ENCODE measurements at regions of chr12 and their contacts with region 1.

Region 1: DNA sequence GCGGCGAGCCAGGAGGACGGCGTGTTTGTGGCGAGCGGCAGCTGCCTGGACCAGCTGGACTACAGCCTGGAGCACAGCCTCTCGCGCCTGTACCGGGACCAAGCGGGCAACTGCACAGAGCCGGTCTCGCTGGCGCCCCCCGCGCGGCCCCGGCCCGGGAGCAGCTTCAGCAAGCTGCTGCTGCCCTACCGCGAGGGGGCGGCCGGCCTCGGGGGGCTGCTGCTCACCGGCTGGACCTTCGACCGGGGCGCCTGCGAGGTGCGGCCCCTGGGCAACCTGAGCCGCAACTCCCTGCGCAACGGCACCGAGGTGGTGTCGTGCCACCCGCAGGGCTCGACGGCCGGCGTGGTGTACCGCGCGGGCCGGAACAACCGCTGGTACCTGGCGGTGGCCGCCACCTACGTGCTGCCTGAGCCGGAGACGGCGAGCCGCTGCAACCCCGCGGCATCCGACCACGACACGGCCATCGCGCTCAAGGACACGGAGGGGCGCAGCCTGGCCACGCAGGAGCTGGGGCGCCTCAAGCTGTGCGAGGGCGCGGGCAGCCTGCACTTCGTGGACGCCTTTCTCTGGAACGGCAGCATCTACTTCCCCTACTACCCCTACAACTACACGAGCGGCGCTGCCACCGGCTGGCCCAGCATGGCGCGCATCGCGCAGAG is 873 bp downstream of the PLXNC1 start:
- DNase-seq: peak in 6 of 10 donors; percentile 30 to 64 (median 52)
- H3K4me3 ChIP-seq: peak overlapping the region; percentile 45 to 79 (median 63)
- H3K27ac ChIP-seq: peak overlapping the region in 45 of 59 donors; percentile 4 to 89 (median 69)
- H3K27me3 ChIP-seq: peaks cover 0 to 23% (median 0%) of the 10 kb centered on the region in 45 donors
- CTCF ChIP-seq: peak in 30 of 56 donors; percentile 3 to 43 (median 18)

Region 2: GRCh38 chr12:94186278-94187241 is 37.3 kb after region 1 on chr12:
- intact Hi-C with region 1: loop called (anchors 1 to 2 kb)
- DNase-seq: peak; percentile 72 to 94 (median 86)
- H3K4me3 ChIP-seq: peak overlapping the region; percentile 34 to 76 (median 58)
- H3K27ac ChIP-seq: peak overlapping the region in 57 of 59 donors; percentile 17 to 93 (median 80)
- H3K27me3 ChIP-seq: no peaks in the 10 kb centered on the region
- CTCF ChIP-seq: no peak

Region 3: DNA sequence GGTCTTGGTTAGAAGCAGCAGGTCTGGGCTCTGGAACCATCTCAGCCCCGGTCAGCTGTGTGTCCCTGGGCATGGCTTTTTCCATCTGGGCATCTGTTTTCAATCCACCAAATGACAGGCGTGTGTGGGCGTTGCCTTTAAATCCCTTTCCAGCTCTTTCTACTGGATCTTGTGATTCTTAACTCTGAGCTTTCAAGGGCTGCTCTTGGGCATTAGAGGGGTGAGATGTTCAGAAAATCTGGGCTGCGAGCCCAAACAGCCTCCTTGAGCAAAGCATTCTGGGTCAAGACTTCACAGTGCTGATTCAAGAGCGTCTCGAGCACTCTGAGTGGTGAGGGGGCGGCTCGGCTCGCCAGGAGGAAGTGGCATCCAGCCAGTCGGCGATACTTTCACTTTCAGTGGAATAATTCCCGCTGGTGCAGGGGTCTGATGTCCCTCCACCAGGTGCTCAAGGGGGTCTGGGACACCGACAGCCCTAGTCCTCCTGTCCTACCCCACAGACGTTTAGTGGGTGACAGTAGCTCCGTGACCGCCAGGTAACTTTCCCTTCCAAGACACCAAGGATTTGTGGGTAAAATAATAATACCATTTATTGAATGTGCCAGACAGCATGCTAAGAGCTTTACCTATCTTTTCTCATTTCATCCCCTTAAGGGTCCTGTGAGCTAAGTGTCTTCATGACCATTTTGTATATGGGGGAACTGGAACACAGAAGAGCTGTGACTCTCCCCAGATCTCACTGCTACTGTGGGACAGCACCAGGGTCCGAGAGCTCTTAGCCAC is 113.2 kb after region 1 on chr12:
- intact Hi-C with region 1: loop called in 1 of 2 experiments (anchors 5 kb)
- DNase-seq: peak; percentile 39 to 85 (median 76)
- H3K4me3 ChIP-seq: peak overlapping the region; percentile 29 to 75 (median 58)
- H3K27ac ChIP-seq: peak overlapping the region; percentile 4 to 90 (median 77)
- H3K27me3 ChIP-seq: no peaks in the 10 kb centered on the region
- CTCF ChIP-seq: peak in 1 of 56 donors; percentile 12

Region 4: GRCh38 chr12:94435511-94435927 is 286.3 kb after region 1 on chr12:
- intact Hi-C with region 1: loop called (anchors 10 kb)
- DNase-seq: no peak
- H3K4me3 ChIP-seq: peak overlapping the region in 10 of 59 donors; percentile 3 to 40 (median 10)
- H3K27ac ChIP-seq: peak overlapping the region in 7 of 59 donors; percentile 8 to 57 (median 28)
- H3K27me3 ChIP-seq: no peaks in the 10 kb centered on the region
- CTCF ChIP-seq: no peak

Region 5: DNA sequence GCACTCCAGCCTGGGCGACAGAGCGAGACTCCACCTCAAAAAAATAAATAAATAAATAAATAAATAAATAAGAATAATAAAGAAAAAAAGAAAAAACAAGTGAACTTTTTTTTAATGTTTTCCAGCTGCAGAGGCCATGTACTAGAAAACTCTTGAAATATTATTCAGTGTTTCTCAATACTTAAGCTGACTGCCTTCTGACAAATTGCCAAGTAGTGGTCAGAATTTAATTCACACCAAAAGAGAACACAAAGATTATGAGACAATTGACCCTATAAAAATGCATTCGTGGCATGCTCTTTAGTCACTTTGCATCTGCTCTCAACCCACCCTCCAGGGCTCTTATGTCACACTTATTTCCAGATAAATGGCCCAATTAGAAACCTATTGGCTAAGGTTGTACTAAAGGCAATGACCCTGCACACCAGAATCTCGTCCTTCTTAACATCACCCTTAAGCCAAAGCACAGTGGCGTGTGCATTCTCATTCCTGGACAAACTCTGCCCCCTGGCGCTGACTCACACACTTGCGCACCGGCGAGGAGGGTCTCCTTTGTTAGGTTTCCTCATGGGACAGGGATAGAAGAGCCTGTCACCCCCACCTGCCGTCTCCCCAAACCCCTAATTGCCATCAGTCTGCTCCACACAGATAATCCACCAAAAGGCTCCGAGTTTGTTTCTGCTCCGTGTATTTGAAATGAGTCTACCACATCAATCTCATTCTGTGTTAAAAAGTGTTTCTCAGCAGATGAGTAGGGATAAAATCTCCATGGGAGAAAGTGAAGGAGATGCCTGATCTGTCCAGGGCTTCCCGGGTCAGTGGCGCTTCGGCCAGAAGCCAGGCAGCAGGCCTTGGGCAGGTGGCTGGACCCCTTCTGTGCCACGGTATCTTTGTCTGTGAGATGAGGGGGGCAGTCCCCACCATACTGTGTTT is 383.5 kb after region 1 on chr12:
- intact Hi-C with region 1: loop called (anchors 2 to 5 kb)
- DNase-seq: peak; percentile 49 to 84 (median 65)
- H3K4me3 ChIP-seq: peak overlapping the region in 1 of 59 donors; percentile 18
- H3K27ac ChIP-seq: peak overlapping the region in 1 of 59 donors; percentile 18
- H3K27me3 ChIP-seq: no peaks in the 10 kb centered on the region
- CTCF ChIP-seq: peak; percentile 58 to 95 (median 86)

Region 6: GRCh38 chr12:94753036-94753679 is 603.9 kb after region 1 on chr12:
- intact Hi-C with region 1: loop called in 1 of 2 experiments (anchors 10 kb)
- DNase-seq: peak in 4 of 10 donors; percentile 8 to 62 (median 36)
- H3K4me3 ChIP-seq: no peak overlapping the region
- H3K27ac ChIP-seq: peak overlapping the region in 1 of 59 donors; percentile 58
- H3K27me3 ChIP-seq: no peaks in the 10 kb centered on the region
- CTCF ChIP-seq: peak in 10 of 56 donors; percentile 12 to 35 (median 24)

Region 7: DNA sequence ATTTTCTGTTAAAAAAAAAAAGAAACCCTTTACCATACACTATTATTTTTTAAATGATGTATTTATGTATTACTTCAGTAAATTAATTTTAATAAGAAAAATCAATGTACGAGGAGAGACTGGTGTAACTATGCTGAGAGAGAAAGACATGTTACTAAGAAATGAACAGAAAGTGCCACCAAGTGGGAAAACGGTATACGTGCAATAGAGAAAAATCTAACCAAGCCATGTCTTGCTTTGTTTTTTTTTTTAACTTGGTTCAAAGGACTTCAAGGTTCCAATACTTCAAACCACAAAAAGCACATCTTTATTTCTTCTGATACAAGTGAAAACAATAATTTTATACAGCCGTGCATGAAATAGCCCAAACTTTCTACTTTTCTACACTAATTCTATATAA is 831.3 kb after region 1 on chr12:
- intact Hi-C with region 1: loop called in 1 of 2 experiments (anchors 10 kb)
- DNase-seq: no peak
- H3K4me3 ChIP-seq: no peak overlapping the region
- H3K27ac ChIP-seq: no peak overlapping the region
- H3K27me3 ChIP-seq: no peaks in the 10 kb centered on the region
- CTCF ChIP-seq: peak in 55 of 56 donors; percentile 18 to 68 (median 44)

Measured in dorsolateral prefrontal cortex (tissue), 120 donors.